AG04450 (cell line): ENCODE measurements at regions of chr9 and their contacts with region 1.

Region 1: GRCh38 chr9:89154651-89155336 is 23.8 kb downstream of the SHC3 start:
- DNase-seq: peak; percentile 71
- H3K4me3 ChIP-seq: no peak overlapping the region
- H3K27ac ChIP-seq: peak overlapping the region; percentile 97
- H3K27me3 ChIP-seq: no peaks in the 10 kb centered on the region
- CTCF ChIP-seq: no peak

Region 2: GRCh38 chr9:89137542-89138462 is 17.0 kb before region 1 on chr9:
- CTCF ChIA-PET with region 1: interaction called, 6 read pairs
- POLR2A ChIA-PET with region 1: interaction called, 23 read pairs
- DNase-seq: peak; percentile 76
- H3K4me3 ChIP-seq: peak overlapping the region; percentile 18; the same call in 1 of the 2 replicates
- H3K27ac ChIP-seq: peak overlapping the region; percentile 72
- H3K27me3 ChIP-seq: no peaks in the 10 kb centered on the region
- CTCF ChIP-seq: no peak

Region 3: DNA sequence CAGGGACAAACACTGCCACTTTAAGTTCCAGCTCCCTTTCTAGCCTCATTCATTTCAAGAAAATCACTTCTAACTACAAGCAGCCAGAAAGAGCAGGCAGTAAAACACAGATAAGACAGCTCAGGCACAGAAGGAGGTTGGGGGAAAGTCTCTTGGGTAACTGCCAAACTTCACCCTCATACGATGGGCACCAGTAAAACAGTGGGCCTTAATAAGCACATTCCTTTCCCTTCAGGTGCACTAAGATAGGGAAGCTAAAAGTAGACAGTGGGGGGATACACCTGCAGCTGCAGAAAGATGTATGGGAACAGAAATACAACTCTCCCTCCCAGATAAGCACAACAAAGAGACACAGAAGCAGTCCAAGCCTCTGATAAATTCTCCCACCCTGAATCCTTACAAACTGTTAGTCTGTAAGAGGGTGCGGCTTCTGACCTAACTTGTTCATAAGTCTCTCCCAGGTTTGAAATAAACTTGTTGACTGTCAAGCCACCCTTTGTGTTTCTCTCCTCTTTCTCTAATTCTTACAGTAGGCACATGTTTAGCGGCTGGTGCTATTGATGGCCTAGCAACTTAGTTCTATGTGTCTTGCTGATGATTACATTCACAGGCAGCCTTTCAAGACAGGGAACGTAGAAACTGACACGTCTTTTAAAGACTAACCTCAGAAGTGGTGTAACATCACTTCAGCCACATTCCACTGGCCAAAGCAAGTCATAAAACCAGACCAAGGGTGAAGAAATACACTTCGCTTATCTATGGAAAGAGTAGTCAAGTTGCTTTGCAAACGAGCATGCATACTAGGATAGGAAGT is 149.4 kb after region 1 on chr9:
- CTCF ChIA-PET with region 1: no interaction called
- POLR2A ChIA-PET with region 1: no interaction called
- DNase-seq: no peak
- H3K4me3 ChIP-seq: no peak overlapping the region
- H3K27ac ChIP-seq: no peak overlapping the region
- H3K27me3 ChIP-seq: no peaks in the 10 kb centered on the region
- CTCF ChIP-seq: no peak